Esophagus squamous epithelium (tissue), 5 donors: ENCODE measurements at regions of chr19 and their contacts with region 1.

Region 1: DNA sequence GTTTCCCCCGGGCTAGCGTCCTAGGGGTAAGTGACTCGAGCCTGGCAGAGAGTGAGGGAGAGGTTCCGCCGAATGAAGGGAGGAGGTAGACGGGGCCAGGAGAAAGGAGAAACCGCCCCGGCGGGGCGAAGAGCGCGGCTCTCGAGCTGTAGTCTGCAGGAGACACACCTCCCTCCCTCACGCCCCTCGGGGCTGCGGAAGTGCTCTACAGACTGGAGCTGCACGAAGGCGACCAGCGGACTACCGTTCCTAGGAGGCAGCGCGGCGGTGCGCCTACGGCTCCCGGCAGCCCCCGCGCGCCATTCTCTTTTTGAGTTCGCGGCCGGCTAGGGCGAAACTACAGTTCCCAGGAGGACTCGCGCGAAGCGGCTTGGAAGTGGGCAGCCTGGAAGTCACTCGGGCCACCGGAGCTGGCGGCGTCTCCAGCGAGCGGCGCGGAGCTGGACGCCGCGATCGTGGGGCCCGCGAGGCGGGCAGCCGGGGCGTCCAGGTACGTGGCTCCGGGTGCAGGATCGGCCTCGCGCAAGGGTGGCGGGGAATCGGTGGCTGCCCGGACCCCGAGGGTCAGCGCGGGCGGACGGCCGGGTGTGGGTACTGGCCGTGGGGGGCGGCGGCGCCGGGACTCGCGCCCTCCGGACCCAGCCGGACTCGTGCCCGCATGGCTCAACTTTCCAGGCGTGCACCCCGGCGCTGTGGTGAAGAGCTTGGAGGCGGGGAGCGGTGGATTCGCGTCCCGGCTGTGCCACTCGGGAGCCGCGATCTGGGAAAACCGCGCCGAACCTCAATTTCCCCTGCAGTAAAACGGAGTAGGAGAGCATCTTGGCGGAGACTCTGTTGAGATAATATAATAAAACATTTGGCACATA is at the start of gene SIPA1L3:
- DNase-seq: peak; percentile 85
- H3K4me3 ChIP-seq: peak within 1 kb of the TSS; percentile 85 to 98 (median 93)
- H3K27ac ChIP-seq: peak within 1 kb of the TSS; percentile 75 to 84 (median 80)
- H3K4me1 ChIP-seq: peaks cover 6 to 33% (median 14%) of the 10 kb centered on the region in 3 donors
- H3K27me3 ChIP-seq: no peaks in the 10 kb centered on the region
- CTCF ChIP-seq: peak in 4 of 6 experiments; percentile 4 to 38 (median 8)
- POLR2A ChIP-seq: peak in 3 of 4 donors; percentile 18 to 64 (median 26)
- total RNA-seq, gene SIPA1L3: 11.1 to 25.3 (median 14.5) TPM

Region 2: GRCh38 chr19:38093587-38093986 is 186.5 kb after region 1 on chr19:
- intact Hi-C with region 1: loop called (anchors 5 kb)
- DNase-seq: no peak
- H3K4me3 ChIP-seq: no peak overlapping the region
- H3K27ac ChIP-seq: no peak overlapping the region
- H3K4me1 ChIP-seq: peaks cover 0 to 7% (median 0%) of the 10 kb centered on the region in 3 donors
- H3K27me3 ChIP-seq: no peaks in the 10 kb centered on the region
- CTCF ChIP-seq: no peak
- POLR2A ChIP-seq: no peak

Region 3: GRCh38 chr19:38229585-38230073 is 322.5 kb after region 1 on chr19:
- intact Hi-C with region 1: loop called (anchors 5 kb)
- DNase-seq: no peak
- H3K4me3 ChIP-seq: peak overlapping the region in 3 of 4 donors; percentile 15 to 47 (median 22)
- H3K27ac ChIP-seq: no peak overlapping the region
- H3K4me1 ChIP-seq: peaks cover 15 to 32% (median 21%) of the 10 kb centered on the region in 3 donors
- H3K27me3 ChIP-seq: peaks cover 15 to 96% (median 25%) of the 10 kb centered on the region in 4 donors
- CTCF ChIP-seq: no peak
- POLR2A ChIP-seq: no peak